ENCODE measurements at regions of chr1 and their contacts with region 1.

Region 1: GRCh38 chr1:50929376-50929958 is 30.6 kb downstream of the FAF1 start:
- DNase-seq: no peak

Region 2: DNA sequence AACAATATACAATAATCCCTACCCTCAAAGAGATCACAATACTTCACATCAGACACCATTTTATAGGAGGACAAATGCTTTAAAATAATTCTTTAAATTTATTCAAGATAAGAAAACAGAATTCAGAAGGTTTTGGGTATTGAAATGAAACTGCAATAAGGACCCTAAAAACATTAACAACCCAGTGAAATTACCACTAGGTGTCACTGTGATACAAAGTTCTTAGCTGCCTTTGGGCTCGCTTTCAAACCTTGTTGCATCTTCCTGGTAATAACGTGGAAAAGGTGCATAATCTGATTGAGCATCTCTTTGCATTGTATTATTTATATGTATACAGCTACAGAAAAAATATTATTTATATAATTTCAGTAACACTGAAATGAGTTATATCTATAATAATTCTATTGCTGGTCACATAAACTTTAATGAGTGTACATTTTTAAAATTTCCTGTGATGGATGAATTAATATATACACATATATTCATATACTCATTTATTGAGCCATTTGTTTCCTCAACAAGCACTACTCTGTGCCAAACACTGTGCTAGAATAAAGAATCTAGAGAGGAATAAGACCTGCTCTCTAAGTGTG is 154.6 kb before region 1 on chr1:
- intact Hi-C with region 1: loop called (anchors 10 kb)
- DNase-seq: no peak

Region 3: DNA sequence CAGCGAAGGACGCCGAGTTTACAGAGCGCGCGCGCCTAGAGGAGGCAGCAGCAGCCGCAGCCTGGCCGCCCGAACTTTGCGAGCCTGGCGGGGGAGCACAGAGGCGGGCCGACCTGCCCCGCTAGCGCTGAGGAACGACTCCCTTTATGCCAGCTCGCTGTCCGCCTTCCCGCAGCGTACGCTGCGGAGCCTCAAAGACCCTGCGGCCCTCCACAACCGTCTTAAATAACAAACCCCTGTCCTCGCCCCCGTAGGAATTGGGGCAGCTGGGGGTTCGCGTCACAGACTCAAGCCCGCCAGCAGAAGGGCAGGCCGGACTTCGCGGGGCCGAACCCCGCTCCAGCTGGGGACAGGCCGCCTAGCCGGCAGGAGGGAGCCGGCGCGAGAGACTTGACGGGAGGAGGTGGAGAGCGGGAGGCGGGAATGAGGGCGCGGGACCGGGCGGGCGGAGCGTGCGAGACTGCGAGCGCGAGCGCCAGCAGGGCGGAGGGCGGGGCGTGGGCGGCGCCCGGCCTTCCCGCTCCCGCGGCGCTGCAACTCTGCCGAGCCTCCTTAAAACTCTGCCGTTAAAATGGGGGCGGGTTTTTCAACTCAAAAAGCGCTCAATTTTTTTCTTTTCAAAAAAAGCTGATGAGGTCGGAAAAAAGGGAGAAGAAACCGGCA is 38.8 kb after region 1 on chr1:
- intact Hi-C with region 1: loop called (anchors 5 kb)
- DNase-seq: peak; percentile 77 to 97 (median 85)

Region 4: GRCh38 chr1:51044834-51045233 is 115.4 kb after region 1 on chr1:
- intact Hi-C with region 1: loop called (anchors 10 kb)
- DNase-seq: no peak